Right cardiac atrium (tissue), 5 donors: ENCODE measurements at regions of chr3 and their contacts with region 1.

Region 1: DNA sequence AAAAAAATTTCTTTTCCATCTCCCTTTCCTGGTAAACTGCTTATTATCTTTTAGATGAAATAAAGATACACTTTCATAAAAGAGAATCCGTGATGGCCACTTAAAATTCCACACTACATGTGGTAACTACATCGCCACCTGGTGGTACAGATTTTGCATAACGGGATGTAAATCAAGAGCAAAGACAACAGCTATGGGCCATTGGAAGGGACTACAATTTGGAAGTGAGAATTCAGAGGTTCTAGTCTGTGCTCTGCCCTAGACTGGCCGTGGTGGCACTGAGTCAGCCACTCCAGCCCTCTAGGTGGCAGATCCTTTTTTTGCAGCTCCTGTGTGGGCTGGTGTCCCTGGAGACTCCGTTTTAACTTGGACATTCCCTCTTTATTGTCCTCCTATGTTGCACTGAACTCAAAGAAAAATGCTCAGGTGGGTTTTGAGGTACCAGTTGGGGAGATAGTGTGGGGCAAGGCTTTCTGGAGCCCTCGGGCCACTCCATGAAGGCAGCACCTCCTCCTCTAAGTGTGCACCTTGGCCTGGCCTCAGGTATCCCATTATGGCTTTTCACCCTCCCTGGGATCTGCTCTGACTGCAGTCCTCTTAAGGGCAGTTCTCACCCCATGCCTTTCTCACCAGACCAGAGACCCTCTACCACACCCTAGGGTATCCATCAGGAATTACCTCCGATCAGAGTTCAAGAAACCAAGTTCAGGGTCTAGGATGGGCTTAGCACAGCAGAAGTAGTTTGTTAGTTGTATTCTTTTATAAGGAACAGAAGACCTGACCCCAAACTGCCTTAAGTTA is 54.9 kb downstream of the SPSB4 start:
- DNase-seq: peak in 2 of 3 donors; percentile 51 to 75
- ATAC-seq: peak in 1 of 2 donors; percentile 32
- H3K4me3 ChIP-seq: no peak overlapping the region
- H3K27ac ChIP-seq: no peak overlapping the region
- H3K4me1 ChIP-seq: peaks cover 7% of the 10 kb centered on the region
- H3K27me3 ChIP-seq: no peaks in the 10 kb centered on the region

Region 2: GRCh38 chr3:139935016-139935865 is 1170.8 kb before region 1 on chr3 and contains the start of gene CLSTN2:
- intact Hi-C with region 1: no loop called
- DNase-seq: peak; percentile 87 to 96 (median 92)
- ATAC-seq: peak; percentile 92
- H3K4me3 ChIP-seq: peak within 1 kb of the TSS; percentile 54
- H3K27ac ChIP-seq: no peak within 1 kb of the TSS
- H3K4me1 ChIP-seq: peaks cover 2% of the 10 kb centered on the region
- H3K27me3 ChIP-seq: no peaks in the 10 kb centered on the region
- total RNA-seq, gene CLSTN2: 19.3 to 31.5 (median 26.2) TPM

Region 3: DNA sequence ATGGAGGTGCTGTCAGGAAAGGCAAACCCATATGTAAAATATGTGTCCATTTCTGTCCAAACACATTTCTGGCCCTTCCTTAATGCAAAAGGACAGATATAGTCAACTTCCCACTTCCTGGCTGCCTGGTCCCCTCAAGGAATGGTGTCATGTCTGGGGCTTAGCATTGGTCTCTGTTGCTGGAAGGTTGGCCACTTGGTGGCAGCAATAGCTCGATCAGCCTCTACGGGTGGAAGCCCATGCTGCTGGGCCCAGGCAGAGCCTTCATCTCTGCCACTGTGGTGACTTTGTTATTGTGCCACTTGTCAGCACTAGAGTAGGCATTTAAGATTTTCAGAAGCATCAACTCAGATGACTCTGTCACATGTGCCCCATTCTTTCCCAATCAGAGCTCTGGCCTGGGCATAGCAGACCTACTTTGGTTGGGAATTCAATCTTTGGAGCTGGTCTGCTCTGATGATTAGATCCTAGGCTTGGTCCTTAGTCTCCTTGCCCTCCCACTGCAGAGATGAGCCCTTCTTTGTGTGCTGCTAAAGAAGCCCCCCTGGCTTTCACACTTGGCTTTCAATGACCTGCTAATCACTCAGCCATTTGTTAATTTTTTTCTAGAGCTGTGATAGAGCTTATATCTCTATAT is 105.9 kb before region 1 on chr3:
- intact Hi-C with region 1: loop called in 2 of 4 experiments (anchors 5 kb)
- DNase-seq: peak; percentile 68 to 84 (median 81)
- ATAC-seq: peak; percentile 94 to 96
- H3K4me3 ChIP-seq: no peak overlapping the region
- H3K27ac ChIP-seq: no peak overlapping the region
- H3K4me1 ChIP-seq: no peaks in the 10 kb centered on the region
- H3K27me3 ChIP-seq: no peaks in the 10 kb centered on the region

Region 4: DNA sequence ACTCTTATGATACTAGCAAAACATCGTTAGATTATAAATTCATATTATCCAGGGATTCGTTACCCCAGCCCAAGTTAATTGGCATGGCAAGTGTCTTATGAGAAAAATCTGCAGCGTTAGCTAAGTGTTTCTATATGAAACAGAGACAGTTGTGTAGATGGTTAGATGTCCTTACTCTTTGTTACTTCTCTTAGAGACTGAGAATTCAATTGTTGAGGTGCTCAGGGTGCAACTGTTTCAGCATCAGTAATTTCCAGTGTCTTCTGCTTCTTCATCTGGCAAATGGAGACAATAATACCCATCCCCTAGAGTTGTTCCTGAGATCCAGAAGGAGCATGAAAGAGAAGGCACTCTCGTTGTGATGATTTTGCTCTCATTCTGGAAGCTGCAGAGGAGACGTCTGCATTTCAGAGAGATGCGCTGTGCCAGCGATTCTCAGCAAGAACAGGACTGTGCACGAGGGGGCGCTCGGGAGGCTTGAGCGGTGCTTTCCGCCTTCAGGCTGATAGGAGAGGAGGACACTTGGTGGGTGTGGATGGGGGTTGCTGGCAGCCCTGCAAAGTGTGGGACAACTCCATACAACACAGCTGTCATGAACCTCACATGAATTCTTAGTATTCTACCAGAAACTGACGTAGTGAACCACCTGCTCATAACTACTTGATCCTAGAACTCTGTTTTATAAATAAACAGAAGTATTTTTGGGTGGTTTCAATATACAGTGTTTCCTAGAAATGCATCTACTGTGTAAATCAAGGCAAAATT is 94.6 kb before region 1 on chr3:
- intact Hi-C with region 1: loop called in 3 of 4 experiments (anchors 5 kb)
- DNase-seq: peak; percentile 78 to 92 (median 89)
- ATAC-seq: peak; percentile 71 to 85
- H3K4me3 ChIP-seq: no peak overlapping the region
- H3K27ac ChIP-seq: no peak overlapping the region
- H3K4me1 ChIP-seq: no peaks in the 10 kb centered on the region
- H3K27me3 ChIP-seq: no peaks in the 10 kb centered on the region

Region 5: GRCh38 chr3:141050576-141051442 is 55.2 kb before region 1 on chr3 and contains the start of gene SPSB4:
- intact Hi-C with region 1: loop called in 2 of 4 experiments (anchors 5 to 10 kb)
- DNase-seq: peak; percentile 71 to 89 (median 89)
- ATAC-seq: peak; percentile 89 to 92
- H3K4me3 ChIP-seq: peak within 1 kb of the TSS; percentile 71
- H3K27ac ChIP-seq: peak within 1 kb of the TSS; percentile 32
- H3K4me1 ChIP-seq: peaks cover 2% of the 10 kb centered on the region
- H3K27me3 ChIP-seq: no peaks in the 10 kb centered on the region
- total RNA-seq, gene SPSB4: 1.1 to 9.7 (median 5.4) TPM